GM12878 (cell line): ENCODE measurements at regions of chr1 and their contacts with region 1.

Region 1: DNA sequence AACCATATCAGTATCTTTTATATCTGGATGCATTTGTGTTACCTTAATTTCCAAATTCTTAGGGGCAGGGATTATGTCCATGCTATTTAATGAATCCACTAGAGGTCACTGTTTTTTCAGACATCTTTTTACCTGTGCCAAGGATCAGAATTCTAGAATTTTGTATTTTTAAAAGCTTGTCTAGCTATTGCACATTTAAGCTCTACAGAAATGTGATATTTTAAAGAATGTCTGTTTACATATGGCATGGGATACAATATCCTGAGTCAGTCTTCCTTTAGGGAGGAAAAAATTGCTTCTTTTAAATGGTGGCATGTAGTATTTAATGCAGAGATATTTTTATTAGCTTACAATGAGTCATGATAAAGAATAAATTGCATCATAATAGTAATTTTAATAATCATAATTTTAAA is 11.3 kb downstream of the RPAP2 start:
- DNase-seq: no peak
- ATAC-seq: peak; percentile 74
- H3K4me3 ChIP-seq: no peak overlapping the region
- H3K27ac ChIP-seq: no peak overlapping the region
- H3K4me1 ChIP-seq: peaks cover 3% of the 10 kb centered on the region; the same call in 1 of the 2 replicates
- H3K27me3 ChIP-seq: no peaks in the 10 kb centered on the region
- CTCF ChIP-seq: peak; percentile 42 to 62 (median 44); a peak in 5 of 6 replicates
- EP300 ChIP-seq: no peak
- POLR2A ChIP-seq: no peak
- RAD21 ChIP-seq: peak; percentile 76

Region 2: GRCh38 chr1:92298573-92299476 is 11.4 kb before region 1 on chr1 and contains the starts of genes GLMN and RPAP2:
- CTCF ChIA-PET with region 1: interaction called, 11 read pairs
- POLR2A ChIA-PET with region 1: interaction called, 5 read pairs
- RAD21 ChIA-PET with region 1: interaction called, 11 read pairs
- SMC1A ChIA-PET with region 1: interaction called, 11 read pairs
- in situ Hi-C with region 1: no loop called
- intact Hi-C with region 1: no loop called
- DNase-seq: peak; percentile 45
- ATAC-seq: peak; percentile 97
- H3K4me3 ChIP-seq: peak within 1 kb of the TSS; percentile 99
- H3K27ac ChIP-seq: peak within 1 kb of the TSS; percentile 93
- H3K4me1 ChIP-seq: no peaks in the 10 kb centered on the region
- H3K27me3 ChIP-seq: no peaks in the 10 kb centered on the region
- CTCF ChIP-seq: 0 out of 6 replicates have a peak, but pooled peaks of 1 of the 3 experiments have one; percentile 13
- EP300 ChIP-seq: no peak
- POLR2A ChIP-seq: peak; percentile 99
- RAD21 ChIP-seq: no peak
- polyA plus RNA-seq, gene GLMN: 18.2 to 20.6 TPM
- polyA plus RNA-seq, gene RPAP2: 20.2 to 24.0 TPM

Region 3: GRCh38 chr1:92476071-92476631 is 166.0 kb after region 1 on chr1:
- CTCF ChIA-PET with region 1: interaction called, 20 read pairs
- POLR2A ChIA-PET with region 1: no interaction called
- RAD21 ChIA-PET with region 1: interaction called, 7 read pairs
- SMC1A ChIA-PET with region 1: interaction called, 7 read pairs
- in situ Hi-C with region 1: no loop called
- intact Hi-C with region 1: loop called (anchors 5 kb)
- DNase-seq: no peak
- ATAC-seq: peak; percentile 56
- H3K4me3 ChIP-seq: no peak overlapping the region
- H3K27ac ChIP-seq: no peak overlapping the region
- H3K4me1 ChIP-seq: peaks cover 34% of the 10 kb centered on the region
- H3K27me3 ChIP-seq: no peaks in the 10 kb centered on the region
- CTCF ChIP-seq: no peak
- EP300 ChIP-seq: no peak
- POLR2A ChIP-seq: 0 out of 2 replicates have a peak, but pooled peaks have one; percentile 44
- RAD21 ChIP-seq: no peak

Region 4: GRCh38 chr1:92583821-92584760 is 273.9 kb after region 1 on chr1:
- CTCF ChIA-PET with region 1: interaction called, 9 read pairs
- POLR2A ChIA-PET with region 1: no interaction called
- RAD21 ChIA-PET with region 1: interaction called, 5 read pairs
- SMC1A ChIA-PET with region 1: interaction called, 11 read pairs
- in situ Hi-C with region 1: no loop called
- intact Hi-C with region 1: no loop called
- DNase-seq: peak; percentile 47
- ATAC-seq: peak; percentile 87
- H3K4me3 ChIP-seq: no peak overlapping the region
- H3K27ac ChIP-seq: peak overlapping the region; percentile 73
- H3K4me1 ChIP-seq: peaks cover 8% of the 10 kb centered on the region
- H3K27me3 ChIP-seq: no peaks in the 10 kb centered on the region
- CTCF ChIP-seq: peak in 2 of 3 experiments; percentile 15 to 32; a peak in 1 of 6 replicates
- EP300 ChIP-seq: peak; percentile 77 to 92; a peak in 3 of 4 replicates
- POLR2A ChIP-seq: no peak
- RAD21 ChIP-seq: peak; percentile 23; the same call in 1 of the 2 replicates

Region 5: GRCh38 chr1:92623187-92623778 is 313.1 kb after region 1 on chr1:
- CTCF ChIA-PET with region 1: interaction called, 32 read pairs
- POLR2A ChIA-PET with region 1: no interaction called
- RAD21 ChIA-PET with region 1: interaction called, 22 read pairs
- SMC1A ChIA-PET with region 1: interaction called, 25 read pairs
- in situ Hi-C with region 1: no loop called
- intact Hi-C with region 1: loop called (anchors 1 kb)
- DNase-seq: no peak
- ATAC-seq: peak; percentile 81
- H3K4me3 ChIP-seq: no peak overlapping the region
- H3K27ac ChIP-seq: no peak overlapping the region
- H3K4me1 ChIP-seq: no peaks in the 10 kb centered on the region
- H3K27me3 ChIP-seq: no peaks in the 10 kb centered on the region
- CTCF ChIP-seq: peak in 2 of 3 experiments; percentile 16 to 34; a peak in 4 of 6 replicates
- EP300 ChIP-seq: no peak
- POLR2A ChIP-seq: no peak
- RAD21 ChIP-seq: peak; percentile 74